ENCODE measurements at regions of chr15 and their contacts with region 1.

Region 1: DNA sequence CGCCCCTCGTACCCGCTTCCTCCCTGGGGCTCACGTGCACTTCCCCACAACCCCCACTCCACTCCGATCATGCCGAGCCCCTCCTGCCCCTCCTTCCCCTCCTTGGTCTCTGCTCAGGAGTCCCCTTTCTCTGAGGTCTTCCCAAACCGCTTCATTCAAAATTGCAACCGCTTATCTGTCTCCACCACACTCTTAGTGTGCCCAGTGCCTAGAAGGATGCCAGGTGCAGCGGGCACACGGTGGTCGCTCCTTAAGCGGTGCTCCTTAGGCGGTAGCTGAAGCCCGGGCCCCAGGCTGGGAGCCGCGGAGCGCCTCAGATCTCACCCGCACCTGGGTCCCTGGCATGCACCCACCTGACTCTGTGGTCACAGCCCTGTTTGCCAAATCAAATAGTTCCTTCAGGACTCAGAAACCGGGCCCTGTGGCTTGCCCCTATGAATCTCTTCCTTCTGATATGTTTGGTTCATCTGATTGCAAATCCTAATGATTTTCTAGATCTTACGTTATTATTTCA is 524.5 kb downstream of the OCA2 start:
- DNase-seq: no peak

Region 2: GRCh38 chr15:26985050-26985449 is 589.5 kb before region 1 on chr15:
- intact Hi-C with region 1: no loop called
- DNase-seq: no peak

Region 3: DNA sequence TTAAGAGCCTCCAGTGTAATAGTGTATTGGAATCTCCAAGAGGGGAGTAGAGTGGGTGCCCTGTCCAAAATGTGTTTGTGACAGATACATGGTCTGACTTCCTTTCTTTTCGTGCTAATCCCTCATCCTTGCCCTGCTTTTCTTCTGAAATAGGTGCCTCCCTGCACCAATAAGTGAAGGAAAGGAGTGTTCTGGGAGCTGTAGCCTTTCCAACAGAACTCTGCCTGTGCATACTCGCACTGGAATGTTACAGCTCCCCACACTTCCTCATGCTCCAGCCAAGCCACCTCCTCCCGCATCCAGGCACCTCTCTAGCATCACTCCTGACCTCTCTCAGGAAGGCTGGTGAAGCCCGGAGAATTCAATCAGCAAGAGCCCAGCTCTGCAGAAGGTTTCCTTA is 125.6 kb before region 1 on chr15:
- intact Hi-C with region 1: loop called in 1 of 2 experiments (anchors 5 kb)
- DNase-seq: no peak

Measured in posterior vena cava (tissue), 2 donors.